ENCODE measurements at regions of chr11 and their contacts with region 1.

Region 1: GRCh38 chr11:9314291-9315036 is at the start of gene TMEM41B:
- DNase-seq: peak; percentile 98 to 99
- ATAC-seq: peak; percentile 99 to 100 (median 100)
- H3K4me3 ChIP-seq: peak within 1 kb of the TSS; percentile 71 to 98 (median 88)
- H3K27ac ChIP-seq: peak within 1 kb of the TSS; percentile 49 to 94 (median 86)
- H3K4me1 ChIP-seq: peaks cover 0 to 29% (median 15%) of the 10 kb centered on the region in 9 donors
- H3K27me3 ChIP-seq: peaks cover 0 to 6% (median 0%) of the 10 kb centered on the region in 7 donors
- CTCF ChIP-seq: peak in 6 of 9 donors; percentile 10 to 43 (median 24)
- total RNA-seq, gene TMEM41B: 17.2 to 25.1 (median 20.8) TPM

Region 2: GRCh38 chr11:9193321-9193720 is 121.1 kb before region 1 on chr11:
- intact Hi-C with region 1: loop called in 1 of 10 experiments (anchors 10 kb)
- DNase-seq: no peak
- ATAC-seq: no peak
- H3K4me3 ChIP-seq: no peak overlapping the region
- H3K27ac ChIP-seq: no peak overlapping the region
- H3K4me1 ChIP-seq: peaks cover 0 to 15% (median 0%) of the 10 kb centered on the region in 9 donors
- H3K27me3 ChIP-seq: no peaks in the 10 kb centered on the region
- CTCF ChIP-seq: no peak

Region 3: GRCh38 chr11:9280655-9281301 is 33.7 kb before region 1 on chr11:
- intact Hi-C with region 1: no loop called
- DNase-seq: no peak
- ATAC-seq: peak in 2 of 8 donors; percentile 35 to 37
- H3K4me3 ChIP-seq: no peak overlapping the region
- H3K27ac ChIP-seq: peak overlapping the region in 5 of 10 donors; percentile 7 to 47 (median 22)
- H3K4me1 ChIP-seq: peaks cover 0 to 12% (median 4%) of the 10 kb centered on the region in 9 donors
- H3K27me3 ChIP-seq: no peaks in the 10 kb centered on the region
- CTCF ChIP-seq: no peak

Region 4: GRCh38 chr11:9363954-9364912 is 49.8 kb after region 1 on chr11:
- intact Hi-C with region 1: loop called in 6 of 10 experiments (anchors 1 to 5 kb)
- DNase-seq: peak; percentile 95
- ATAC-seq: peak; percentile 97 to 99 (median 98)
- H3K4me3 ChIP-seq: peak overlapping the region in 9 of 10 donors; percentile 20 to 58 (median 50)
- H3K27ac ChIP-seq: peak overlapping the region; percentile 93 to 100 (median 98)
- H3K4me1 ChIP-seq: peaks cover 0 to 36% (median 15%) of the 10 kb centered on the region in 9 donors
- H3K27me3 ChIP-seq: no peaks in the 10 kb centered on the region
- CTCF ChIP-seq: peak in 1 of 9 donors; percentile 36

Region 5: GRCh38 chr11:9384535-9385303 is 70.3 kb after region 1 on chr11 and contains the start of gene IPO7:
- intact Hi-C with region 1: loop called in 5 of 10 experiments (anchors 2 to 10 kb)
- DNase-seq: peak; percentile 89 to 90
- ATAC-seq: peak; percentile 95 to 98 (median 97)
- H3K4me3 ChIP-seq: peak within 1 kb of the TSS; percentile 66 to 93 (median 88)
- H3K27ac ChIP-seq: peak within 1 kb of the TSS; percentile 85 to 98 (median 96)
- H3K4me1 ChIP-seq: peaks cover 4 to 50% (median 34%) of the 10 kb centered on the region in 9 donors
- H3K27me3 ChIP-seq: no peaks in the 10 kb centered on the region
- CTCF ChIP-seq: peak in 8 of 9 donors; percentile 7 to 56 (median 20)
- total RNA-seq, gene IPO7: 129 to 169 (median 146) TPM

Region 6: DNA sequence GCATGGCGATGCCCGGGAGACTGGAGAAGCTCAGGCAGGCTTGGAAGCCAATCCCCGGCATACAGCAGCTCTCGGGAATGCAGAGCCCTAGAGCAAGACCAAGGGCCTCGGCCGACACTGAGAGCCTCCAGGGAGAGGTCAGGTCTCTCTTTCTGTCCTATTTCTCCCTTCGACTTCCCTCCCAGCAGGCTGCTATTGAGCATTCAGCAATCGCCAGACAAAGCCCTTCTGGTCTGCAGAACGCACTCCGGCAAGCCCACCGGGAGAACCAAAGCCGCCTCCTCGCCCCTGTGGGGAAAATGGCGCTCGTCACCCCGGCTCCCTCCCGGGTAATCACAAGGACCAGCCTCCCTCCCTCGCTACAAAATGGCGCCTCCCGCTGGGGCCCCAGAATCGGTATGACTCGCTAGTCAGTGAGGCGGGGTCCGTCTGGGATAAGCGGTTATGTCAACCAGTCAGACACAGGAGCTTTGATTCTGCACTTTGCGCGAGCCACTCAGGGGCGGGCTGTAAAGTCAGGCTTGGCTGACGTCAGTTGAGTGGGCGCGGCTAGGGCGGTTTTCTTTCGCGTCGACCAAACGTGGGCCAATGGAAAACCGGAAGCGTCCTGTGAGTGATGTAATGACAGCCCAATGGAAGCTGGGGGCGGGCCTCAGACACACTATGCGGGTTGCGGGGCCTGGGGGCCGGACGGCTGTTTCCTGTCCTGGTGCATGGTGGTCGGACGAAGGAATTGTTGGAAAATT is 146.0 kb after region 1 on chr11 and contains the start of gene ZNF143:
- intact Hi-C with region 1: loop called in 1 of 10 experiments (anchors 5 kb)
- DNase-seq: peak; percentile 100
- ATAC-seq: peak; percentile 94 to 98 (median 97)
- H3K4me3 ChIP-seq: peak within 1 kb of the TSS; percentile 71 to 99 (median 80)
- H3K27ac ChIP-seq: peak within 1 kb of the TSS; percentile 97 to 100 (median 98)
- H3K4me1 ChIP-seq: peaks cover 3 to 29% (median 21%) of the 10 kb centered on the region in 9 donors
- H3K27me3 ChIP-seq: no peaks in the 10 kb centered on the region
- CTCF ChIP-seq: no peak
- total RNA-seq, gene ZNF143: 11.7 to 28.8 (median 17.6) TPM

Region 7: GRCh38 chr11:9802291-9802861 is 487.9 kb after region 1 on chr11:
- intact Hi-C with region 1: no loop called
- DNase-seq: no peak
- ATAC-seq: peak in 7 of 8 donors; percentile 62 to 89 (median 86)
- H3K4me3 ChIP-seq: no peak overlapping the region
- H3K27ac ChIP-seq: peak overlapping the region in 8 of 10 donors; percentile 13 to 84 (median 70)
- H3K4me1 ChIP-seq: peaks cover 7 to 39% (median 34%) of the 10 kb centered on the region in 9 donors
- H3K27me3 ChIP-seq: no peaks in the 10 kb centered on the region
- CTCF ChIP-seq: no peak

Measured in heart right ventricle (tissue), 16 donors.